ENCODE measurements at regions of chr1 and their contacts with region 1.

Region 1: GRCh38 chr1:161045750-161046571 is at the start of gene USF1:
- DNase-seq: peak; percentile 95 to 96 (median 96)
- H3K4me3 ChIP-seq: peak within 1 kb of the TSS; percentile 81 to 96 (median 95)
- H3K4me3 Mint-ChIP-seq: peak within 1 kb of the TSS; percentile 99
- H3K27ac ChIP-seq: peak within 1 kb of the TSS; percentile 88 to 99
- H3K27ac Mint-ChIP-seq: peak within 1 kb of the TSS; percentile 99 to 100 (median 100)
- H3K4me1 ChIP-seq: peaks cover 50 to 63% of the 10 kb centered on the region in 2 donors
- H3K4me1 Mint-ChIP-seq: peaks cover 71% of the 10 kb centered on the region
- H3K27me3 ChIP-seq: no peaks in the 10 kb centered on the region
- H3K27me3 Mint-ChIP-seq: no peaks in the 10 kb centered on the region
- CTCF ChIP-seq: no peak
- polyA plus RNA-seq, gene USF1: 6.3 to 335 (median 25.5) TPM

Region 2: DNA sequence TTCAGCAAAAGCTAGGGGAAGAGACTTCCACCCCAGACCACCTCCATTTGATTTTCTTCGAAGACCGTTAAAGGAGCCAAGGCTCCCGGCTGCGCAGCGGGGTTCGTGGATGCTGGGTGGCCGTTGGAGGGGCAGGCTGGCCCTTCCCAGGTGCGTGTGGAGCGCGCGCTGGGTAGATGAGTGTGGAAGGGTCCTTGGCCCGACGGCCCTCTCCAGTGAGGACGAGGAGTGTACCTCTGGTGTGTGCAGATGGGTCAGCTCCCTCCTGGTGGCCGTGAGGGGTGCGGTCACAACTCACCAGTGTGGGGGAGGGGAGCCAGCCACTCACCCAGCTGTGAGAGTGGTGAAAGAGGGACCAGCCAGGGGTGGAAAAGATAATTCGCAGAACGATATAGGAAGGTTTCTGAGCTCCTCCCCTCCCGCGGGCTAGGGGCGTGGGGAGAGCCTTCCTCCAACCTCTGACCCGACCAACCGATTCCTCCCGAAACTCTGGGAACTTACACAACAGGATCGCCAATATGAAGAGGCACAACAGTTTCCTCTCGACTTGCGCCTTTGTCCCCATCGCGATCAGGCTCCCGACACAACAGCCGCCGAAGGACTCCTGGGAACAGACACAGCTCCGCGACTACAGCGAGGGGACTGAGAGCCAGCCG is 25.3 kb before region 1 on chr1 and contains the start of gene F11R:
- intact Hi-C with region 1: loop called in 1 of 2 experiments (anchors 1 kb)
- DNase-seq: peak; percentile 29 to 48 (median 36)
- H3K4me3 ChIP-seq: peak within 1 kb of the TSS; percentile 59 to 87 (median 60)
- H3K4me3 Mint-ChIP-seq: peak within 1 kb of the TSS; percentile 93 to 95
- H3K27ac ChIP-seq: peak within 1 kb of the TSS; percentile 38 to 73
- H3K27ac Mint-ChIP-seq: peak within 1 kb of the TSS; percentile 73 to 96 (median 92)
- H3K4me1 ChIP-seq: peaks cover 44 to 51% of the 10 kb centered on the region in 2 donors
- H3K4me1 Mint-ChIP-seq: peaks cover 54% of the 10 kb centered on the region
- H3K27me3 ChIP-seq: no peaks in the 10 kb centered on the region
- H3K27me3 Mint-ChIP-seq: peaks cover 1 to 12% (median 2%) of the 10 kb centered on the region in 3 donors
- CTCF ChIP-seq: peak; percentile 30
- polyA plus RNA-seq, gene F11R: 28.8 to 58.0 (median 35.9) TPM

Region 3: GRCh38 chr1:161066694-161067093 is 20.7 kb after region 1 on chr1:
- intact Hi-C with region 1: loop called (anchors 1 to 2 kb)
- DNase-seq: peak in 1 of 3 donors; percentile 21
- H3K4me3 ChIP-seq: peak overlapping the region; percentile 1 to 96 (median 10)
- H3K4me3 Mint-ChIP-seq: peak overlapping the region; percentile 99
- H3K27ac ChIP-seq: peak overlapping the region; percentile 93 to 97
- H3K27ac Mint-ChIP-seq: peak overlapping the region; percentile 98 to 100 (median 99)
- H3K4me1 ChIP-seq: peaks cover 48 to 59% of the 10 kb centered on the region in 2 donors
- H3K4me1 Mint-ChIP-seq: peaks cover 67% of the 10 kb centered on the region
- H3K27me3 ChIP-seq: no peaks in the 10 kb centered on the region
- H3K27me3 Mint-ChIP-seq: peaks cover 0 to 2% (median 1%) of the 10 kb centered on the region in 3 donors
- CTCF ChIP-seq: no peak

Region 4: GRCh38 chr1:161139765-161140164 is 93.8 kb after region 1 on chr1:
- intact Hi-C with region 1: loop called in 1 of 2 experiments (anchors 5 kb)
- DNase-seq: peak; percentile 47 to 60 (median 51)
- H3K4me3 ChIP-seq: no peak overlapping the region
- H3K4me3 Mint-ChIP-seq: no peak overlapping the region
- H3K27ac ChIP-seq: peak overlapping the region in 1 of 2 donors; percentile 88
- H3K27ac Mint-ChIP-seq: peak overlapping the region in 5 of 7 donors; percentile 35 to 97 (median 86)
- H3K4me1 ChIP-seq: peaks cover 40 to 42% of the 10 kb centered on the region in 2 donors
- H3K4me1 Mint-ChIP-seq: peaks cover 48% of the 10 kb centered on the region
- H3K27me3 ChIP-seq: no peaks in the 10 kb centered on the region
- H3K27me3 Mint-ChIP-seq: no peaks in the 10 kb centered on the region
- CTCF ChIP-seq: peak; percentile 73